Activated CD4-positive, alpha-beta T cell treated with anti-CD3 and anti-CD28 coated beads for 36 hours (primary cell): ENCODE measurements at regions of chr11 and their contacts with region 1.

Region 1: GRCh38 chr11:122491509-122491908 is 164.0 kb upstream of the UBASH3B start:
- DNase-seq: no peak
- ATAC-seq: no peak
- H3K4me3 Mint-ChIP-seq: no peak overlapping the region
- H3K27ac Mint-ChIP-seq: no peak overlapping the region
- H3K4me1 Mint-ChIP-seq: no peaks in the 10 kb centered on the region
- H3K27me3 Mint-ChIP-seq: peaks cover 8% of the 10 kb centered on the region

Region 2: GRCh38 chr11:122505304-122506006 is 13.9 kb after region 1 on chr11:
- CTCF ChIA-PET with region 1: interaction called, 9 read pairs
- POLR2A ChIA-PET with region 1: interaction called, 10 read pairs
- intact Hi-C with region 1: no loop called
- DNase-seq: peak; percentile 78
- ATAC-seq: peak; percentile 77
- H3K4me3 Mint-ChIP-seq: no peak overlapping the region
- H3K27ac Mint-ChIP-seq: no peak overlapping the region
- H3K4me1 Mint-ChIP-seq: no peaks in the 10 kb centered on the region
- H3K27me3 Mint-ChIP-seq: peaks cover 33% of the 10 kb centered on the region